Activated T-helper 1 cell treated with anti-CD3 and anti-CD28 coated beads, Interleukin-12 subunit alpha, Interleukin-12 subunit beta, Interleukin-2, Interleukin-4 antibody, amounts not matched to agents 30 ng/mL and 10 ng/mL and 1 ng/mL, durations not matched to agents 14 hours and 24 hours and 36 hours (primary cell): ENCODE measurements at regions of chr4 and their contacts with region 1.

Region 1: DNA sequence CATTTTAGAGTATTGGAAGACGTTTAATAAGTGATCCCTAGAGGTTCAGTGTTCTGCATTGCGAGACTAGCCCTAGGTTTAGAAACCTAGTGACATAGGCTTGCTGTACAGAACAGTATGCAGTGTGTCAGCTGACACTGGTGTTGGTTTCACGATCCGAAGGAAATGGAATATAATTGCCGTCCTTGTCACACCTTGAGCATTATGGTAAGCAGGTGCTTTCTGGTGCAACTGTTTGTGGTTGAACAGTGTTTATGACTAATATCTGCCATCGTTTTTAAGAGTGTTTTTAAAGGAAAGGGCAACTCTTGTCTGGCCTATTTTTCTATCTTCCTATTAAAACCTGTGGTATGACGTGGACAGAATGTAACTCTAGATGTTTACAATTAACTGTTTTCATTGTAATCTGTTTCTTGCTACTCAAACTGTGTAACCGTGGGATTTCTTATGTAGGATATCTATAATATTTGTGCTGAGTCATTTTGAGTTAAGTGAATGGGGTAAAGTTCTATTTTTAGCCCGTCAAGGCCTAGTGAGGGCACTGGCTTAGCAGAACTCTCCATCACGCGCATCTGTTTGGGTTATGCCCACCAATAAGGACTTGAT is 53.8 kb upstream of the TBC1D14 start:
- DNase-seq: peak; percentile 12
- H3K4me3 Mint-ChIP-seq: no peak overlapping the region
- H3K27ac Mint-ChIP-seq: peak overlapping the region; percentile 85
- H3K4me1 Mint-ChIP-seq: peaks cover 27% of the 10 kb centered on the region
- H3K27me3 Mint-ChIP-seq: no peaks in the 10 kb centered on the region

Region 2: GRCh38 chr4:6824071-6824470 is 31.7 kb before region 1 on chr4:
- intact Hi-C with region 1: loop called (anchors 5 kb)
- DNase-seq: no peak
- H3K4me3 Mint-ChIP-seq: no peak overlapping the region
- H3K27ac Mint-ChIP-seq: no peak overlapping the region
- H3K4me1 Mint-ChIP-seq: peaks cover 13% of the 10 kb centered on the region
- H3K27me3 Mint-ChIP-seq: no peaks in the 10 kb centered on the region

Region 3: GRCh38 chr4:6892190-6892908 is 36.6 kb after region 1 on chr4:
- intact Hi-C with region 1: loop called (anchors 5 kb)
- DNase-seq: peak; percentile 34
- H3K4me3 Mint-ChIP-seq: peak overlapping the region; percentile 43
- H3K27ac Mint-ChIP-seq: peak overlapping the region; percentile 78
- H3K4me1 Mint-ChIP-seq: peaks cover 36% of the 10 kb centered on the region
- H3K27me3 Mint-ChIP-seq: no peaks in the 10 kb centered on the region

Region 4: GRCh38 chr4:7313347-7313811 is 457.6 kb after region 1 on chr4:
- intact Hi-C with region 1: no loop called
- DNase-seq: no peak
- H3K4me3 Mint-ChIP-seq: no peak overlapping the region
- H3K27ac Mint-ChIP-seq: no peak overlapping the region
- H3K4me1 Mint-ChIP-seq: no peaks in the 10 kb centered on the region
- H3K27me3 Mint-ChIP-seq: no peaks in the 10 kb centered on the region